ENCODE measurements at regions of chr21 and their contacts with region 1.

Region 1: DNA sequence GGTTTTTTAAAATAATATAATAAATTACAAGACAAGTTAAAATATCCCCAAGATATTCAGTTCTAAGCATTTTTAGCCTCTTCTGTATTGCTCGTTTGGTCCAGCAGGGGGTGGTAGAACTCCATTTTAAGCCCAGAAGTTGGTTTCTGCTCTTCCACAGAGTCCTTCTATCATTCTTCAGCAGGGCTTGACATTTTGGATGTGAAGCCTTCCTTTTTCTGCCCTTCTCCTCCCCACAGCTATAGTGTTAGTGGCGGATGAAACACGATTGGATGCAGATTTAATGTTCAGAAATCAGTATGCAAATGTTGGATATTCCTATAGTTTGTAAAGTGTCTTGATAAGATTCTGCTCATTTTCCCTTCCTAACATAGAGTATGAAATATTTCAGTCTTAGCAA is 1.4 kb downstream of the NCAM2 start:
- DNase-seq: no peak
- H3K4me3 Mint-ChIP-seq: no peak overlapping the region
- H3K27ac Mint-ChIP-seq: no peak overlapping the region
- H3K4me1 Mint-ChIP-seq: peaks cover 6% of the 10 kb centered on the region
- H3K27me3 Mint-ChIP-seq: peaks cover 29% of the 10 kb centered on the region

Region 2: DNA sequence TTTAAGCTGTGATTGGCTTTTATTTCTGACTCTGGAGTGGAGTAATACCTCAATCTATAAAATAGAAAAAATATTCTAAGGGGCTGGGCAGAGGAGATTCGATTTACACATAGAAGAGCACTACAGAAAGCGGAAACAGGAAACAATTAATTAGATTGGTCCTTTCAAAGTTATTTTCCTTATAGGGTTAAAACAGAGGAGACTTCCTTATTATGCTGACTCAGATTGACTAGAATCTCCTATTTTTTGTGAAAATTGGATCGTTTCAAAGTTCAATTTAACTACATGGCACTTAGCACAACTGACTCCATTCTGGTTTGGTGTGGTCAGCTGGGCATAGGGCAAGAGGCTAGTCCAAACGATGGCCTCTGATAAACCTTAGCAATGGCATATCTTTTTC is 49.8 kb before region 1 on chr21:
- intact Hi-C with region 1: no loop called
- DNase-seq: no peak
- H3K4me3 Mint-ChIP-seq: no peak overlapping the region
- H3K27ac Mint-ChIP-seq: no peak overlapping the region
- H3K4me1 Mint-ChIP-seq: no peaks in the 10 kb centered on the region
- H3K27me3 Mint-ChIP-seq: peaks cover 3% of the 10 kb centered on the region

Region 3: DNA sequence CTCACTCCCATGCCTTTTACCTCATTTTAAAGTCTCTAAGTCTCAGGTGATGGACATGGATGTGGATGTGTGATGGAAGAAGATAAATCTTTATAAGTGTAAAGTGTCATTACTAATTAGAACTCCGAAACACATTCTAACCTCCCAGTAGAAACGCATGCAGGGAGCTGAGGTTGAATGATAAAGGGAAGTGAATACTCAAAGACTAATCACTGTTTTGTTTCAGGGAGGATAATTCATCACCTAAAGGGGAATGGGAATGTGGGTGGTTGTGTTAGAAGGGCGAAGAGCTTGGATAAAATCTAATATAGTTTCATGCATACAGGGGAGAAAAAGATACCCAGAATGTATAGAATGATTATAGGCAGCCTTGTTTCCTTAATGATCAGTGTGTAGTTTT is 11.0 kb after region 1 on chr21:
- intact Hi-C with region 1: no loop called
- DNase-seq: no peak
- H3K4me3 Mint-ChIP-seq: no peak overlapping the region
- H3K27ac Mint-ChIP-seq: no peak overlapping the region
- H3K4me1 Mint-ChIP-seq: no peaks in the 10 kb centered on the region
- H3K27me3 Mint-ChIP-seq: no peaks in the 10 kb centered on the region

Region 4: DNA sequence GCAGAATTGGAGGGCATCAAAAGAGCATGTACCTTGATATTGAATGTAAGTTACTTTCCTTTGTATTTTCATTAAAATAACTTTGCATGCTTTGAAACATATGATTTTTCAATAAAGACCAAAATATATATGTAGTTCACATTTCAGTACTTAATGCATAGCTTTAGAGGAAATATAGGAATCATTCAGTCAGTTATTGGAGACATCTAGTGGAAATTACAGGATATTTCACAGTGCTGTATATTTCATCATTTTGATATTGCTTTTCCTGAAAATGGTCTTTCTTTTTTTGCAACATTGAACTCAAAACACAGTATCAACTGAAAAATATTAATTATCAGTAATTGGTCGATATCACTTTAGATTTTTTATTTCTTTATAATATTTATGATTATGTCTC is 374.3 kb after region 1 on chr21:
- intact Hi-C with region 1: loop called (anchors 10 kb)
- DNase-seq: no peak
- H3K4me3 Mint-ChIP-seq: no peak overlapping the region
- H3K27ac Mint-ChIP-seq: no peak overlapping the region
- H3K4me1 Mint-ChIP-seq: no peaks in the 10 kb centered on the region
- H3K27me3 Mint-ChIP-seq: no peaks in the 10 kb centered on the region

Region 5: GRCh38 chr21:21921421-21922232 is 922.0 kb after region 1 on chr21:
- intact Hi-C with region 1: loop called (anchors 1 kb)
- DNase-seq: no peak
- H3K4me3 Mint-ChIP-seq: no peak overlapping the region
- H3K27ac Mint-ChIP-seq: no peak overlapping the region
- H3K4me1 Mint-ChIP-seq: no peaks in the 10 kb centered on the region
- H3K27me3 Mint-ChIP-seq: no peaks in the 10 kb centered on the region

Measured in activated T-helper 1 cell treated with anti-CD3 and anti-CD28 coated beads, Interleukin-12 subunit alpha, Interleukin-12 subunit beta, Interleukin-2, Interleukin-4 antibody, amounts not matched to agents 30 ng/mL and 10 ng/mL and 1 ng/mL, durations not matched to agents 14 hours and 24 hours and 36 hours (primary cell).